Adrenal gland (tissue), 19 donors: ENCODE measurements at regions of chr10 and their contacts with region 1.

Region 1: DNA sequence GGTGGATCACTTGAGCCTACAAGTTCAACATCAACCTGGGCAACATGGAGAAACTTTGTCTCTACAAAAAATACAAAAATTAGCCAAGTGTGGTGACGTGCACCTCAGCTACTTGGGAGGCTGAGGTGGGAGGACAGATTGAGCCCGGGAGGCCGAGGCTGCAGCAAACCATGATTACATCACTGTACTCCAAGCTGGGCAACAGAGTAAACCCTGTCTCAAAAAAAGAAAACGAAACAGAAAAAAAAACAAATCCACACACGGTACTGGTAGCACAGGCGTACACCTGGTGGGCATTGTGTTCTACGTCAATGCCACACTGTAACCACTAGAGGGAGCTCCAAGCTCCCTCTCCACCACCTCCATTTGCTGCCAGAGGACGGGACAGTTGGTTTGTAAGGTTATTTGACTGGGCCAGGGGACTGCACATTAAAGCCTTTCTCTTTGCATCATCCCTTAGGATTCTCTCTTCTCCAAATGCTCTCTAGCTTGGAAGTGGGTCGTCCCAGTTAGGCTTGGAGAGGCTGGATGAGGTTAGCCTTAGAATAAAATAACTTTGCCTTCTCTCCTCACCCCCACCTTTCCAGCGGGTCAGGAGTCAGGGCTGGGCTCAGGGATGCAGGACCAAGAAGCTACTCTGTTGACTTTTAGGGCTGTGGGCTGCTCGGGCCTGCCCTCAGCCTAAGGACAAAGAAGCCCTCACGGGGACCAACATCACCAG is 130.8 kb downstream of the SORBS1 start:
- DNase-seq: peak; percentile 51 to 80 (median 62)
- H3K4me3 ChIP-seq: no peak overlapping the region
- H3K27ac ChIP-seq: no peak overlapping the region
- H3K4me1 ChIP-seq: peaks cover 0 to 12% of the 10 kb centered on the region in 2 donors
- H3K27me3 ChIP-seq: no peaks in the 10 kb centered on the region
- CTCF ChIP-seq: peak; percentile 90 to 98 (median 96)
- POLR2A ChIP-seq: no peak

Region 2: DNA sequence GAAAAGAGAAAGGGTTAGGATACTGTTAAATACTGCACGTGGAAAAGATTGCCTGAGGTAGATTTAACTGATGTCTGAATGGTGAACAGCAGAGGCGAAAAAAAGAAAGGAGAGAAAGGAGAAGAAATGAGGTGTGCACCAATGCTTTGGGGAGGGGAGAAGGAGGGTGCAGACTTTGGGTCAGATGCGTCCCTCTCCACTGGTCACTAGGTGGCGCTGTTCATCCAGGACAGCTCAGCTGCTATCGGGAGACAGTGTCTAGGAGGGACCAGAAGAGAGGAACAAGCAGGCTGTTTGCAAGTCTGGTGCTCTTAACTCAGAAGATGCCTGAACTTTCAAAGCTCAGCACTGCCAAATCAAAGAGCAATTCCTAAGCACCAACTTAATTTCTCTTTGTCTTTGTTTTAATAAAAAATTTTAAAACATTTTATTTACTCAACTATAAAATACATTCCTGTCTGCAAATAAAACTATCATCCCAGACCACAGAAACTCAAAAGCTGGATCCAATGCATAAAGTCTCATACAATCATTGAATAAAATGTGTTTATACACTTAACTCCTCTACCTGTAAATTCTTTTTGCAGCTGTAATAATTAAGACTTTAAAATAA is 55.7 kb before region 1 on chr10:
- intact Hi-C with region 1: loop called in 1 of 2 experiments (anchors 10 kb)
- DNase-seq: peak; percentile 76 to 89 (median 83)
- H3K4me3 ChIP-seq: no peak overlapping the region
- H3K27ac ChIP-seq: no peak overlapping the region
- H3K4me1 ChIP-seq: no peaks in the 10 kb centered on the region
- H3K27me3 ChIP-seq: no peaks in the 10 kb centered on the region
- CTCF ChIP-seq: peak; percentile 75 to 96 (median 94)
- POLR2A ChIP-seq: no peak

Region 3: DNA sequence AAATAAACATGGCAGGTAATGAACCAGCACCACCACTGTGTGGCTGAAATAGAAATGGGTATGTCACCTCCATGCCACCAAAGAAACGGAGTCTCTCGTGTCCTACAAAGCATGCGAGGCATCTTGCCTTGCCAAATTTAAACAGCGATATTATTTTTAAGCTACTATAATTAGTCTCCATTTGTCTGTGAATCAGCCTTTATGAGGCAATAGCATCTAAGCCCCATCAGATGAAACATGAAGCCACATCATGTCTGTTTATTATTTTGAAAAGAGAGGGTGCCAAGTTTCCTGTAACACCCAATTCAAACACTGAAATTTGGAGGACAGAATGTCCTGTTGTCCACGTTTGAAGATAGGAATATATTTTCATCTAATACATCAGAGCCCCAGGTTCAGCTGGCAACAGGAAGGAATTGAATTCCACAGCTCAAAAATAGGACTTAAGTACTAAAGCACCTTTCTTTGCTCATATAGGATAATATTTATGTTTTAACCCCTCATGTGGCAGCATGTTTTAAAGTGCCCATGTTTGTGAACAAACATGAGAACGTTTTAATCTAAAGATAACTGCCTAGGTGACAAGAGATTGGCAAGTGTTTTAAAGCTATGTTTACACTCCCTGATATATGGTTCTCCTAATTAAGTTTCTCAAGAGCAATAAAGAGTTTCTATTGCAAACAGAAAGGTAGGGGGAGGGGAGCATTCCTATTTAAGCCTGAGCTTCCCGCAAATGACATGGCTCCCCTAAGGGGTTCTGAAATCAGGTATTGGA is 44.0 kb after region 1 on chr10:
- intact Hi-C with region 1: no loop called
- DNase-seq: no peak
- H3K4me3 ChIP-seq: no peak overlapping the region
- H3K27ac ChIP-seq: peak overlapping the region in 4 of 5 donors; percentile 24 to 80 (median 56)
- H3K4me1 ChIP-seq: peaks cover 0 to 14% of the 10 kb centered on the region in 2 donors
- H3K27me3 ChIP-seq: no peaks in the 10 kb centered on the region
- CTCF ChIP-seq: no peak
- POLR2A ChIP-seq: no peak

Region 4: DNA sequence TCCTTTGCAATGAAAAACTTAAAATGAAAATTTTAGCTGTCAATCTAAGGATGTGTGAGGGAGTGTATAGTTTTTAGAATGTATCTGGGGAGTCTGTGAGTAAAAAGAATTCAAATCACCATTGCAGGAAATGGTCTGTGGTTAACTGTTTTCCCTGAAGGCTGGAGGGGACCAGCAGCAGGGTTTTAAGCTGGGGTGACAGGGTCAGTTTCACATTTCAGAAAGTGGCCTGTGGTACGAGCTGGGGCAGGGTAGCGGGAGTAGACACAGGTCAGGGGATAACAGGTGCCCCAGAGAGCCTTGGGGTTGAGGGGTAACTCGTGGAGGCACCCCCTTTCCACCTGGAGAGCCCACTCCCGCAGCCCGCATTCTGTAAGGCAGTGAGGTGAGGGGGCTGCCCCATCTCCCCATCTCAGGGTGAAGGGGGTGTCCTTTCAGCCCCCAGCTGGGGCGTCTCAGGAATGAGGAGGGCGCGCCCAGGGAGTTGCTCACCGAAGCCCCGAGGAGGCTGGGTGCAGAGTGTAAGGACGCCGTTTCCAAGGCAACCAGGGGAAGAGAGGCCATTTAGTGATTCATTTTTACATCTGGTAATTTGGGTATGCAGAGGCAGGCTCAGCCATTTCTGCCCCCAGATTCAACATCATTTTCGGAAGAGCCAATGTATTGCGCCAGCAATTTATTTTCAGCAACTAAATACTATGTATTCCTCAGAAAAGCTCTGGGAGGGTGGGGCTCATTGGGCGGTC is 1586.5 kb after region 1 on chr10:
- intact Hi-C with region 1: no loop called
- DNase-seq: no peak
- H3K4me3 ChIP-seq: no peak overlapping the region
- H3K27ac ChIP-seq: no peak overlapping the region
- H3K4me1 ChIP-seq: peaks cover 9 to 12% of the 10 kb centered on the region in 2 donors
- H3K27me3 ChIP-seq: no peaks in the 10 kb centered on the region
- CTCF ChIP-seq: no peak
- POLR2A ChIP-seq: no peak